Activated CD8-positive, alpha-beta memory T cell treated with anti-CD3 and anti-CD28 coated beads, Interleukin-2, amount 10 ng/mL, durations not matched to agents 7 days and 5 days (primary cell): ENCODE measurements at regions of chr1 and their contacts with region 1.

Region 1: GRCh38 chr1:228664399-228664914 is 70.8 kb upstream of the RHOU start:
- DNase-seq: peak; percentile 84
- ATAC-seq: peak; percentile 45
- H3K4me3 Mint-ChIP-seq: no peak overlapping the region
- H3K27ac Mint-ChIP-seq: no peak overlapping the region
- H3K4me1 Mint-ChIP-seq: peaks cover 5% of the 10 kb centered on the region
- H3K27me3 Mint-ChIP-seq: peaks cover 24% of the 10 kb centered on the region

Region 2: DNA sequence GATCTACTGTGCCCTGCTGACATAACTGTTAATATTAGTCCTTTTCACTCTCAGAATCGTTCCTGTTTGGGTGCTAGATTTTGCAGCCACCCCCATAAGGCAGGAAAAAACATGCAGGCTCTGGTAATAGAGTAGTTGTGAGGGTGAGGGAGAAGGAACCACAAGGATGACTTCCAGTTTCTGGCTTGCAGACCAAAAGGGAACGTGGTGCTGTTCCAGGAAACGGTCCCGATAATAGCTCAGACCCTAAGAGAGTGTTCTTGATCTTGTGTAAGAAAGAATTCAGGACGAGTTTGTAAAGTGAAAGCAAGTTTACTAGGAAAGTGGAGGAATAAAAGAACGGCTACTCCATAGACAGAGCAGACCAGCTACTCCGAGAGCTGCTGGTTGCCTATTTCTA is 20.1 kb after region 1 on chr1:
- CTCF ChIA-PET with region 1: no interaction called
- DNase-seq: no peak
- ATAC-seq: no peak
- H3K4me3 Mint-ChIP-seq: no peak overlapping the region
- H3K27ac Mint-ChIP-seq: no peak overlapping the region
- H3K4me1 Mint-ChIP-seq: no peaks in the 10 kb centered on the region
- H3K27me3 Mint-ChIP-seq: peaks cover 58% of the 10 kb centered on the region

Region 3: GRCh38 chr1:228734881-228735801 is 70.7 kb after region 1 on chr1 and contains the start of gene RHOU:
- CTCF ChIA-PET with region 1: interaction called, 10 read pairs
- DNase-seq: peak; percentile 72
- ATAC-seq: peak; percentile 94
- H3K4me3 Mint-ChIP-seq: peak within 1 kb of the TSS; percentile 77
- H3K27ac Mint-ChIP-seq: no peak within 1 kb of the TSS
- H3K4me1 Mint-ChIP-seq: peaks cover 10% of the 10 kb centered on the region
- H3K27me3 Mint-ChIP-seq: peaks cover 57% of the 10 kb centered on the region
- total RNA-seq, gene RHOU: 0.61 to 4.5 TPM

Region 4: DNA sequence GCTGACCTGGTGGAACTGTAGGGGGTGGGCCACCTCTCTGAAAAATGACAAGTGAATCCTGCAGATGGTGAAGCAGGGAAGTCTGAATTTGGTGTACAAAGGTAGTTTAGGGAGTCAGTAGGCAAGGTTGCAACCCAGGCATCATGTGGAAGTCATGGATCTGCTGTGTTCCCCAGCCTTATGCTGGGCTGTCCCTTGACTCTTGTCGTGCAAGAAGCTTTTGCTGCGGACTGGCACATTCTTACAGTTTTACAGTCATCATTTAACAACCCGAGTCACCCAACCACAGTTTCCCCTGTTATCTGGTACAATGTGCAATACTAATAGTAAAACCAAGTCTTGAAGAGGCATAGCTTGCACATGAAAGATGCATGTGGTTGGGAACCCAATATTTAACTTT is 84.0 kb after region 1 on chr1:
- CTCF ChIA-PET with region 1: no interaction called
- DNase-seq: peak; percentile 79
- ATAC-seq: peak; percentile 80
- H3K4me3 Mint-ChIP-seq: no peak overlapping the region
- H3K27ac Mint-ChIP-seq: peak overlapping the region; percentile 74
- H3K4me1 Mint-ChIP-seq: peaks cover 53% of the 10 kb centered on the region
- H3K27me3 Mint-ChIP-seq: peaks cover 18% of the 10 kb centered on the region